ENCODE measurements at regions of chr19 and their contacts with region 1.

Region 1: GRCh38 chr19:588093-588740 is 1.5 kb upstream of the HCN2 start:
- DNase-seq: peak; percentile 57
- ATAC-seq: peak; percentile 60
- H3K4me3 ChIP-seq: peak overlapping the region in 1 of 3 experiments; percentile 54; a peak in 1 of 6 replicates
- H3K27ac ChIP-seq: no peak overlapping the region
- H3K4me1 ChIP-seq: peaks cover 35% of the 10 kb centered on the region
- H3K27me3 ChIP-seq: peaks cover 10 to 46% of the 10 kb centered on the region in 2 experiments
- CTCF ChIP-seq: peak; percentile 78
- EP300 ChIP-seq: no peak
- POLR2A ChIP-seq: no peak
- RAD21 ChIP-seq: peak; percentile 33

Region 2: DNA sequence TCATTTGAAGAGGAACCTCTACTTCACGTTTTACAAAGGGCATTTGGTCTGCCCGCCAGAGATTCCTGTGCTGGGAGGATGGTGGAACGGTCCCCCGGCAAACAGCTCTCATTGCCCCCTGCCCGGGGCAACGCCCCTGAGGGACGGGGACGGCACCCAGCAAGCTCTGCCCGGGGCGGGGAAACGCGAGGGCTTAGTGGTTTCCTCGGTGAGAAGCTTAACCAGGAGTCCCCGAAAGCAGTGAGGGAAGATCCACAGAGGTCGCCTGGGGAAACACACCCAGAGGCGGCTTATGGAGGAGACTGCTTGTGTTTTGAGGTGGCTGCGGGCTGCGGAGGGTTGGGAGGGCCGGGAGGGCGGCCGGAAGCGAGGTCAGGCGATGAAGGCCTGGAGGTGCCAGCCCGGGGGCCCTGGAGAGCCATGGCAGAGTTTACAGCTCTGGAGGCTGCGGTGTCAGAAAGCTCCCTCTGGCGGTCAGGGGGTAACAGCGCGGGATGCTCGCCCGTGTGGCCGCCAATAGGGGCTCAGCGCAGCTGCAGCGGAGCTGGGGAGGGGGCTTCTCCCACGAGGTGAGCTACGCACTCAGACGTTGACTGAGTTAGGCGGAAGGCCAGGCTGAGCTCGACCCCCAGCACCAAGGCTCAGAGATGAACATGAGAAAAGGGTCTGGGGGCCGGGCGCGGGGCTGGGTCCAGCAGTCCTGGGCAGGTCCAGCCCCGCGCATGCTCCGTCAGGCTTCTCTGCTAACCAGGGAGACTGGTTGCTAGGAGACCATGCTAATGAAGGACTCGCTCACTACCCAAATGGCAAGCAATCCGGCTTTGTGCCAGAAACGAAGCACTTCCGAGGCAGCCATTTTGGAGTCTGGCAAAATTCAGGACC is 81.6 kb before region 1 on chr19:
- CTCF ChIA-PET with region 1: no interaction called
- POLR2A ChIA-PET with region 1: no interaction called
- in situ Hi-C with region 1: no loop called
- intact Hi-C with region 1: no loop called
- DNase-seq: peak; percentile 99
- ATAC-seq: peak; percentile 82
- H3K4me3 ChIP-seq: peak overlapping the region; percentile 93 to 99 (median 97)
- H3K27ac ChIP-seq: peak overlapping the region; percentile 98
- H3K4me1 ChIP-seq: peaks cover 33% of the 10 kb centered on the region
- H3K27me3 ChIP-seq: no peaks in the 10 kb centered on the region
- CTCF ChIP-seq: peak; percentile 99
- EP300 ChIP-seq: no peak
- POLR2A ChIP-seq: peak; percentile 39 to 44; a peak in 1 of 4 replicates
- RAD21 ChIP-seq: peak; percentile 92

Region 3: DNA sequence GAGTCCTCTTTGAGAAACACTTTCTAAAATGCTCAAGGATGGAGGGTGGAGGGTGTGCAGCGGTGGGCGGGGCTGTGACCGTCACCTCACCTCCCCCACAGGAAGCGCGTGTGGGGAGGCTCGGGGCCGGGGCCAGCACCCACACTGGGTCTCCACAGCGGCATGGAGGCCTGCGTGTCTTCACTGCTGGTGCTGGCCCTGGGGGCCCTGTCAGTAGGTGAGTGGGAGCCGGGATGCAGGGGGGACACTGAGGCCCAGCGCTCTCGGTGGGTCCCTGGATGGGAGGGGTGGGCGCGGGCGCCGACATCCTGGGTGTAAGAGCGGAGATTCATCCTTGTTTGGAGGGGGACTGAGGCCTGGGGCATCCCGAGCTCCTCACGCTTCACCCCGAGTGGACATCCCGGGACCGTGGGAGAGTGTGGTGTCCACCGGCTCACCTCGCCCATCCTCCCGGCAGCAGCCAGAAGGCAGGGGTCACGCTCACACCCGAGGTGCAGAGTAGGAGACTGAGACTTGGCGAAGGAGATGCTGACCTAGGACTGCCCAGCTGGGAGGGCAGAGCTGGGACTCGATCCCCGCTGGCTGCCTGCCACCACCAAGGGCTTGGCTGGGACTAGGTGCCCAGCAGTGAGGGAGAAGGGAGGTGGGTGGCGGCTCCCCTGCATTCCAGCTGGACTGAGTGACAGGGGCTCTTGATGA is 44.2 kb before region 1 on chr19 and contains the start of gene GZMM:
- CTCF ChIA-PET with region 1: no interaction called
- POLR2A ChIA-PET with region 1: no interaction called
- in situ Hi-C with region 1: no loop called
- intact Hi-C with region 1: no loop called
- DNase-seq: no peak
- ATAC-seq: peak; percentile 13
- H3K4me3 ChIP-seq: no peak within 1 kb of the TSS
- H3K27ac ChIP-seq: no peak within 1 kb of the TSS
- H3K4me1 ChIP-seq: no peaks in the 10 kb centered on the region
- H3K27me3 ChIP-seq: peaks cover 0 to 8% of the 10 kb centered on the region in 2 experiments; a peak in 2 of 5 replicates
- CTCF ChIP-seq: no peak
- EP300 ChIP-seq: no peak
- POLR2A ChIP-seq: peak in 1 of 2 experiments; percentile 46; a peak in 2 of 4 replicates
- RAD21 ChIP-seq: no peak
- total RNA-seq, gene GZMM: not detected in 2 replicates

Region 4: DNA sequence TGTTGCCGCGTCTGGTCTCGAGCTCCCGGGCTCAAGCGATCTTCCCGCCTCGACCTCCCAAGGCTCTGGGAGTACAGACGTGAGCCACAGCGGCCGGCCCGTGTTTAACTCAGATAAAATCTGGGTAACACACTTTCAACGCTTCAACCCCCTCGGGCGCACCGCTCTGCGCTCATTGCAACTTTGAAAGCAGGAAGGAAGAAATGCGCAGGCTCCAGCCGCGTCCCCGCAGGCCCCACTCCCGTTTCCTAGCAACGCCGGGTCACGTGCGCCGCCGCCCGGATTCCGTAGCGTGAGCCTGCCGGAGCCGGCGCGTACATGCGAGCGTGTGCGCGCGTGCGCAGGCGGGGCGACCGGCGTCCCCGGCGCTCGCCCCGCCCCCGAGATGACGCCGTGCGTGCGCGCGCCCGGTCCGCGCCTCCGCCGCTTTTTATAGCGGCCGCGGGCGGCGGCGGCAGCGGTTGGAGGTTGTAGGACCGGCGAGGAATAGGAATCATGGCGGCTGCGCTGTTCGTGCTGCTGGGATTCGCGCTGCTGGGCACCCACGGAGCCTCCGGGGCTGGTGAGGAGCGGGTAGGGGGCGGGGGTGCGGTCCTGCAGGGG is 16.0 kb before region 1 on chr19 and contains the start of gene BSG:
- CTCF ChIA-PET with region 1: interaction called, 3 read pairs
- POLR2A ChIA-PET with region 1: interaction called, 16 read pairs
- in situ Hi-C with region 1: no loop called
- intact Hi-C with region 1: no loop called
- DNase-seq: peak; percentile 94
- ATAC-seq: peak; percentile 53
- H3K4me3 ChIP-seq: peak within 1 kb of the TSS; percentile 90 to 99 (median 96)
- H3K27ac ChIP-seq: peak within 1 kb of the TSS; percentile 95
- H3K4me1 ChIP-seq: peaks cover 30% of the 10 kb centered on the region
- H3K27me3 ChIP-seq: no peaks in the 10 kb centered on the region; a peak in 1 of 5 replicates
- CTCF ChIP-seq: no peak
- EP300 ChIP-seq: 0 out of 4 replicates have a peak, but pooled peaks of 1 of the 2 experiments have one; percentile 23
- POLR2A ChIP-seq: peak; percentile 96 to 97
- RAD21 ChIP-seq: peak; percentile 70
- total RNA-seq, gene BSG: 136 and 309 TPM in 2 replicates

Region 5: DNA sequence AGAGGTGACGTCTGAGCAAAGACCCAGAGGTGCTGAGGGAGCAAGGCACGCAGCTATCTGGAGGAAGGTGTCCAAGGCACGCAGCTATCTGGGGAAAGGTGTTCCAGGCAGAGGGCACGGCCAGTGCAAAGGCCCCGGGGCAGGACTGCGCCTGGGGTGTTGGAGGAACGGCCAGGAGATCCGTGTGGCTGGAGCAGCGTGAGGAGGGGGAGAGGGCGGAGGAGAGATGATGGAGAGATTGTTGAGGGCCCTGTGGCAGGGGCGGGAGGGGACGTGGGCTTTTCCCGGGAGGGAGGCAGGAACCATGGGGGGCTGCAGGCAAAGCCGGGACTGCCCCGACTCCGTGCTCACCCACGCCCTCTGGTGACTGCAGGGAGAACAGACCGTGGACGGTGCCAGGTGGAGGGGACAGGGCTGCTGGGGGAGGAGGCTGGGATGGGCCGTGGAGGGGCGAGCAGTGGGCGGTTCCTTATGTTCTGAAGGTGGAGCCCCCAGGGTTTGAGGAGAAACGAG is 149.4 kb after region 1 on chr19:
- CTCF ChIA-PET with region 1: no interaction called
- POLR2A ChIA-PET with region 1: no interaction called
- in situ Hi-C with region 1: loop called (anchors 10 kb)
- intact Hi-C with region 1: no loop called
- DNase-seq: peak; percentile 41
- ATAC-seq: peak; percentile 56
- H3K4me3 ChIP-seq: peak overlapping the region in 1 of 3 experiments; percentile 5; a peak in 1 of 6 replicates
- H3K27ac ChIP-seq: peak overlapping the region; percentile 88
- H3K4me1 ChIP-seq: peaks cover 48% of the 10 kb centered on the region
- H3K27me3 ChIP-seq: no peaks in the 10 kb centered on the region
- CTCF ChIP-seq: peak; percentile 90
- EP300 ChIP-seq: no peak
- POLR2A ChIP-seq: no peak
- RAD21 ChIP-seq: peak; percentile 53; the same call in 1 of the 2 replicates

Measured in HepG2 (cell line).